Left colon (tissue), 2 donors: ENCODE measurements at regions of chr5 and their contacts with region 1.

Region 1: GRCh38 chr5:68287976-68288706 is 72.6 kb downstream of the PIK3R1 start:
- DNase-seq: peak; percentile 66 to 71
- ATAC-seq: peak; percentile 78

Region 2: DNA sequence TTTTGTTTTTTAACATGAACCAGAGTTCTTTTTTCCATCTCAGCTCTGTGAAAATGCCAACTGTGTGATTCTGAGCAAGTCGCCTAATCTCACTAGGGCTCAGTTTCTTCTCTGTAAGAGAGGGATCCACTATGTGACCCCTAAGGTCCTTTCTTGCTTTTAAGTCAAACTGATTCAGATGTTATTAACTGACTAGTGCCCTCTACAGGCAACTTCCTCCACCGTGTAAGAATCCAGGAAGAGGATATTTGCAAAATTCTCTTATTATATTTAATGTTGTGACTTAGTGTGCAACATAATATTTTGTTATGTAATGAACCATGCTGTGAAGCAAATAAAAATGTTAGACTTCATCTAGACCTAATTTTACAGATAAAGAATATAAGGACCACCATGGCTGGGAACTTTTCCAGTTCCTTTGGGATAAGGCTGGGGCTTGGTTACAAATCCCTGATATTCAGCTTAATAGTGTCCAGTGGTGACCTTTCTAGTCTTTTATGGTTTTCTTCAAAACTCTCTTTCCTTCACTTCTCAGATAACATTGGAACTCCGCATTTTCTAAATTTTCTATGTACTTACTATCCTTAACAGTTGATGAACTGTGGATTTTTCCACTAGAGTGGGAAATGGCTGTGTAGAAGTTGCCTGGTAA is 172.1 kb after region 1 on chr5:
- intact Hi-C with region 1: loop called in 1 of 2 experiments (anchors 5 kb)
- DNase-seq: peak in 1 of 2 donors; percentile 49
- ATAC-seq: peak; percentile 42

Region 3: DNA sequence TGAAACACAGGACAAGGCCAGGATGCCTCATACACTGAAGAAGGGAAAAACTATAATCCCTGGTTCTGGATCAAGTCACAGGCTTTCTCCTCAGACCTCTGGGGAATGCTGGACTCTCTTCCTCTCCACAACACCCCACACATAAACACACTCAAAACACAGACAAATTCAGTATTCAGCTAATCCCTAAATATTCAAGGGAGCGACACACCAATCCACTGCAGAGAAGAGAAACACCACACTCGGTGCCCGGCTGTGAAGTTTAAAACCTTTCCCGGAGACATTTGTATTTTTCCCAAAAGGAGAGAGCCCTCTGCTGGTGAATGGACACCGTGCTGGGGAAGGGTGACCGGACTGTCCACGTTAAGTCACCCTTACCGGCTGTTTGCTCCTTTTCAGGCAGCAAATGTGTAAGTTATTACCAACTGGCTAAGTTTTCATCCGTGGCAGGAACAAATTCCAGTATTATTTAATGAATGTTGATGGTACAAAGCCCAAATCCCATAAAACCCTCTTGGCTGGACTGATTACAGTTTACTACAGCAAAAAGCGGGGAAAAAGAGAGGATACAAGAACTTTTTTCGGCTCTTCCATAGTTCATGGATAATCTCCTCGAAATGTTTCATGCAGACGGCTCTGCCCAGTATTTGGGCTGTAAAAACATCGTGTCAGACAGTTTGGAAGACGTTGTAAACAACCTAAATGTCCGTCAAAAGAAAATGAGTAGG is 674.8 kb after region 1 on chr5:
- intact Hi-C with region 1: loop called in 1 of 2 experiments (anchors 10 kb)
- DNase-seq: peak; percentile 48 to 68
- ATAC-seq: peak; percentile 83